PC-9 (cell line): ENCODE measurements at regions of chr3 and their contacts with region 1.

Region 1: DNA sequence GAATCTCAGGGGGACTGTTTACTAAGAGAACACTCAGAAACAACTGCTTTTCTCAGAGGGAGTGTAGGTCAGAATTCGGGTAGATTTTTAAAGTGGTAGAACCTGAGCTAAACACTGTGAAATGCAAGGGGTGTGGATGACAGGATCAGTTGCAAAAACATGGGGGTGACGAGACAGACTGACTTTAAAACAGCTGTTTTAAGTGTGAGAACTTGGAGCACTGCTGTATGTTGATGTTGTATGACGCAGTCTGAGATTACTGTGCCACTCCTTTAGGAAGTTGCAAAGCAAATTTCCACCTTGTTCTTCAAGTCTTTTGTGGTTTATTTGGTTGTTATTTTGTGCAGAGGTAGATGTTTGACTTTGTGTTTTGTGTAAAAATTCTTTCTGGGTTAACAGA is 36.8 kb upstream of the DIPK2A start:
- DNase-seq: no peak
- H3K4me3 ChIP-seq: no peak overlapping the region
- H3K27ac ChIP-seq: no peak overlapping the region
- H3K4me1 ChIP-seq: no peaks in the 10 kb centered on the region
- H3K27me3 ChIP-seq: no peaks in the 10 kb centered on the region
- CTCF ChIP-seq: no peak

Region 2: DNA sequence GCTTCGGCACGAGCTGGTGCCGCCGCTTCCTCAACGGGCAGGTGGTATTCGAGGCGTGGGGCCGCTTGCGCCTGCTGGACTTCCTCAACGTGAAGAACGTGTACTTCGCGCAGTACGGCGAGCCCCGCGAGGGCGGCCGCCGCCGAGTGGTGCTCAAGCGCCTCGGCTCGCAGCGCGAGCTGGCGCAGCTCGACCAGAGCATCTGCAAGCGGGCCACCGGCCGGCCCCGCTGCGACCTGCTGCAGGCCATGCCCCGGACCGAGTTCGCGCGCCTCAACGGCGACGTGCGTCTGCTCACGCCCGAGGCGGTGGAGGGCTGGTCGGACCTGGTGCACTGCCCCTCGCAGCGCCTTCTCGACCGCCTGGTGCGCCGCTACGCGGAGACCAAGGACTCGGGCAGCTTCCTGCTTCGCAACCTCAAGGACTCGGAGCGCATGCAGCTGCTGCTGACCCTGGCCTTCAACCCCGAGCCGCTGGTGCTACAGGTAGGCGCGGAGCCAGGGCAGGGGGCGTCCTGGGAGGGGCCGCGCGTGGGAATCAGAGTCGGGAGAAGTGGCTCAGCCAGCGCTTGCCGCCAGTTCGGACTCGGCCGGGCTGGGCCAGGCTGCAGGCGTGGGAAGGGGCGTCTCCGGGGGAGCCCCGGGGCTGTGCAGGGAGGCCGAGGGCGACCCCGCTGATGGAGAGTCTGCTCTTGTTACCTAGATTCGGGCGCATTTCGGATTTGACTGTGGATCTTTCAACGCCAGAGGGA is 37.9 kb after region 1 on chr3:
- CTCF ChIA-PET with region 1: no interaction called
- POLR2A ChIA-PET with region 1: no interaction called
- intact Hi-C with region 1: no loop called
- DNase-seq: peak; percentile 65 to 70
- H3K4me3 ChIP-seq: peak overlapping the region; percentile 90
- H3K27ac ChIP-seq: peak overlapping the region; percentile 70
- H3K4me1 ChIP-seq: peaks cover 37% of the 10 kb centered on the region
- H3K27me3 ChIP-seq: no peaks in the 10 kb centered on the region
- CTCF ChIP-seq: peak; percentile 43; the same call in 1 of the 2 replicates

Region 3: GRCh38 chr3:144362126-144362525 is 427.3 kb after region 1 on chr3:
- CTCF ChIA-PET with region 1: no interaction called
- POLR2A ChIA-PET with region 1: interaction called, 11 read pairs
- intact Hi-C with region 1: no loop called
- DNase-seq: peak; percentile 33 to 81
- H3K4me3 ChIP-seq: 0 out of 2 replicates have a peak overlapping the region, but pooled peaks have one; percentile 9
- H3K27ac ChIP-seq: peak overlapping the region; percentile 40; the same call in 1 of the 2 replicates
- H3K4me1 ChIP-seq: peaks cover 20% of the 10 kb centered on the region
- H3K27me3 ChIP-seq: no peaks in the 10 kb centered on the region
- CTCF ChIP-seq: no peak